MCF 10A (cell line): ENCODE measurements at regions of chr17 and their contacts with region 1.

Region 1: DNA sequence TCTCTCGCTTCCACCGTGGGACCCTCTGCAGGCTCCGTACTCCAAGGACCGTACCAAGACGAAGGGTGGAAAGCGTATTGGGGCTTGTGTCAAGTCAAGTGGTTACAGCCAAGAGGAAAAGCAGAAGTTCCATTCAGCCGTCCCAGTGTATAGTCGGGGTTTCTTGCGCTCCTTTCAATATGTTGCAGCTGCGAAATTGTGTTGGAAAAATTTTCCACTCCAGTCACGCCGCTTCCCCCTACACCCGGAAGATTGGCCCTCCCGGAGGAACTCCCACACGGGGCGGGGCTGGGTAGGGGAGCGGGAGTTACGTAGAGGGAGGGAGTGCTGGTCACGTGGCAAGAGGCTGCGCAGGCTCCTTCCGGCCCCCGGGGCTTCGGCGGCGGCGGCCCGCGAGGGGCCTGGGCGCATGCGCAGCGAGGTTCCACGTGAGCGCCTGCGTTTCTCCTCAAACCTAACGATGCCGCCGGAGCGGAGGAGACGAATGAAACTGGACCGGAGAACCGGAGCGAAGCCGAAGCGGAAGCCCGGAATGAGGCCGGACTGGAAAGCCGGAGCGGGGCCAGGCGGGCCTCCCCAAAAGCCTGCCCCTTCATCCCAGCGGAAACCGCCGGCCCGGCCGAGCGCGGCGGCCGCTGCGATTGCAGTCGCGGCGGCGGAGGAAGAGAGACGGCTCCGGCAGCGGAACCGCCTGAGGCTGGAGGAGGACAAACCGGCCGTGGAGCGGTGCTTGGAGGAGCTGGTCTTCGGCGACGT is at the start of gene UTP18:
- DNase-seq: peak; percentile 97
- H3K4me3 Mint-ChIP-seq: peak within 1 kb of the TSS; percentile 74
- H3K27ac Mint-ChIP-seq: peak within 1 kb of the TSS; percentile 96
- H3K4me1 Mint-ChIP-seq: peaks cover 35% of the 10 kb centered on the region
- H3K27me3 Mint-ChIP-seq: no peaks in the 10 kb centered on the region
- CTCF ChIP-seq: no peak
- total RNA-seq, gene UTP18: 25.3 and 27.8 TPM in 2 replicates

Region 2: DNA sequence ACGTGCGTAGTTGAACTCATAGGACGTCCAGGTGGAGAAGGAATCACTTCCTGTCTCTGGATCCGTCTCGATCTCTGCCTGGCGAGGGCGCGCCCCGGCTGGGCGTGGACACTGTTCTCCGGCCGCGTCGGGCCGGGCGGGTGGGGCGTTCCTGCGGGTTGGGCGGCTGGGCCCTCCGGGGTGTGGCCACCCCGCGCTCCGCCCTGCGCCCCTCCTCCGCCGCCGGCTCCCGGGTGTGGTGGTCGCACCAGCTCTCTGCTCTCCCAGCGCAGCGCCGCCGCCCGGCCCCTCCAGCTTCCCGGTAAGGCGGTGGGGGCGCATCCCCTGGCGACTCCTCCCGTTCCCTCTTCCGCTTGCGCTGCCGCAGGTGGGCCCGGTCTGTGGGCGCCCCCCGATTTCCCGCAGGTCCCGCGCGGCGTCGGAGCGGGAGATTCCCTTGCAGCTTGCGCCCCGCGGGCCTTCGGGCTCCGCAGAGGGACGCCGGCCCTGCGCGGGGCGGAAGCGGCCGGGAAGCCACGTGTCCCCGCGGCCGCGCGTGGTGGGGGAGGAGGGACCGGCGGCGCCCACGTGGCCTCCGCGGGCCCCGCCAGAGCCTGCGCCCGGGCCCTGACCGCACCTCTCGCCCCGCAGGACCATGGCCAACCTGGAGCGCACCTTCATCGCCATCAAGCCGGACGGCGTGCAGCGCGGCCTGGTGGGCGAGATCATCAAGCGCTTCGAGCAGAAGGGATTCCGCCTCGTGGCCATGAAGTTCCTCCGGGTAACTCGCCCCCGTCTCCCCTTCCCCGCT is 93.9 kb before region 1 on chr17 and contains the start of gene NME2:
- CTCF ChIA-PET with region 1: interaction called, 3 read pairs
- POLR2A ChIA-PET with region 1: interaction called, 8 read pairs
- intact Hi-C with region 1: loop called (anchors 2 kb)
- DNase-seq: peak; percentile 91
- H3K4me3 Mint-ChIP-seq: peak within 1 kb of the TSS; percentile 99
- H3K27ac Mint-ChIP-seq: peak within 1 kb of the TSS; percentile 100
- H3K4me1 Mint-ChIP-seq: peaks cover 30% of the 10 kb centered on the region
- H3K27me3 Mint-ChIP-seq: no peaks in the 10 kb centered on the region
- CTCF ChIP-seq: no peak
- total RNA-seq, gene NME2: 1,004 and 1,033 TPM in 2 replicates

Region 3: GRCh38 chr17:51218915-51219314 is 41.4 kb before region 1 on chr17:
- CTCF ChIA-PET with region 1: no interaction called
- POLR2A ChIA-PET with region 1: no interaction called
- intact Hi-C with region 1: no loop called
- DNase-seq: no peak
- H3K4me3 Mint-ChIP-seq: no peak overlapping the region
- H3K27ac Mint-ChIP-seq: no peak overlapping the region
- H3K4me1 Mint-ChIP-seq: no peaks in the 10 kb centered on the region
- H3K27me3 Mint-ChIP-seq: no peaks in the 10 kb centered on the region
- CTCF ChIP-seq: no peak

Region 4: GRCh38 chr17:51270636-51271035 is 10.3 kb after region 1 on chr17:
- CTCF ChIA-PET with region 1: interaction called, 4 read pairs
- POLR2A ChIA-PET with region 1: interaction called, 11 read pairs
- intact Hi-C with region 1: no loop called
- DNase-seq: no peak
- H3K4me3 Mint-ChIP-seq: no peak overlapping the region
- H3K27ac Mint-ChIP-seq: peak overlapping the region; percentile 42
- H3K4me1 Mint-ChIP-seq: peaks cover 9% of the 10 kb centered on the region
- H3K27me3 Mint-ChIP-seq: no peaks in the 10 kb centered on the region
- CTCF ChIP-seq: no peak